Tibial artery (tissue), 4 donors: ENCODE measurements at regions of chr19 and their contacts with region 1.

Region 1: GRCh38 chr19:20167020-20167644 is at the start of gene ZNF486:
- DNase-seq: peak; percentile 98 to 99
- H3K4me3 ChIP-seq: peak within 1 kb of the TSS; percentile 71 to 86
- H3K27ac ChIP-seq: peak within 1 kb of the TSS; percentile 74 to 79
- H3K4me1 ChIP-seq: peaks cover 0 to 12% (median 9%) of the 10 kb centered on the region in 4 donors
- H3K27me3 ChIP-seq: no peaks in the 10 kb centered on the region
- CTCF ChIP-seq: no peak

Region 2: GRCh38 chr19:19732579-19733501 is 434.3 kb before region 1 on chr19 and contains the start of gene ZNF14:
- intact Hi-C with region 1: loop called (anchors 5 kb)
- DNase-seq: peak; percentile 96
- H3K4me3 ChIP-seq: peak within 1 kb of the TSS; percentile 75
- H3K27ac ChIP-seq: peak within 1 kb of the TSS; percentile 72 to 81
- H3K4me1 ChIP-seq: peaks cover 0 to 13% (median 5%) of the 10 kb centered on the region in 4 donors
- H3K27me3 ChIP-seq: no peaks in the 10 kb centered on the region
- CTCF ChIP-seq: no peak

Region 3: DNA sequence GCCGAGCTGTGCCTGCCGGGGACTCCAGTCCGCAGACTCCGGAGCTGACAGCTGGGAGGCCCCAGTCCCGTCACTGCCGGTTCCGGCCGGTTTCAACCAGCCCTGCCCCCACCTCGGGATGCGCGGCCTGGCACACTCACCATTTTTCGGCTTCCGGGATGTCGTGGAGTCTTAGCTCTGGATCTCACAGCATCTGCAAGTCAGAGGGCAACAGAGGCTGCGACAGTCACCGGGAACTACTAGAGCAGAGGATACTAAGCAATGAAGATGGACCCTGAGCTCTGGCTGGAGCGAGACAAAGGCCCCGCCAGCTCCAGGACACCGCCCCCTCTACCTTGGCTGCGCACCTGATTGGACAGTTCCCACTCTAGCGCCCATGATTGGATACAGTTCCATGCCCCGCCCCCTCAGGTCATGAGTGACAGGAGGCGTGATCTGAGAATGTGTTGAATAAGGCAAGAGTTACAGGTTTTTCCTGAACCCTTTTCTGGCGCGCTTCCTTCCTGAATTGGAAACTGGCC is 127.9 kb before region 1 on chr19 and contains the start of gene ZNF682:
- intact Hi-C with region 1: loop called (anchors 5 kb)
- DNase-seq: peak; percentile 97 to 99
- H3K4me3 ChIP-seq: peak within 1 kb of the TSS; percentile 69 to 81
- H3K27ac ChIP-seq: peak within 1 kb of the TSS; percentile 71 to 74
- H3K4me1 ChIP-seq: peaks cover 0 to 5% (median 0%) of the 10 kb centered on the region in 4 donors
- H3K27me3 ChIP-seq: peaks cover 0 to 3% of the 10 kb centered on the region in 2 donors
- CTCF ChIP-seq: no peak

Region 4: DNA sequence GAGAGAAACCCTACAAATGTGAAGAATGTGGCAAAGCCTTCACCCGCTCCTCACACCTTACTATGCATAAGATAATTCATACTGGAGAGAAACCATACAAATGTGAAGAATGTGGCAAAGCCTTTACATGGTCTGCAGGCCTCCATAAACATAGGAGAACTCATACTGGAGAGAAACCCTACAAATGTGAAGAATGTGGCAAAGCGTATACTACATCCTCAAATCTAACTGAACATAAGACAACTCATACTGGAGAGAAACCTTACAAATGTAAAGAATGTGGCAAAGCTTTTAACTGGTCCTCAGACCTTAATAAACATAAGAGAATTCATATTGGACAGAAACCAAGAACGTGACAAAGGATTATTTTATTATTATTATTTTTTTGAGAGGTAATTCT is 30.6 kb after region 1 on chr19:
- intact Hi-C with region 1: no loop called
- DNase-seq: no peak
- H3K4me3 ChIP-seq: no peak overlapping the region
- H3K27ac ChIP-seq: no peak overlapping the region
- H3K4me1 ChIP-seq: no peaks in the 10 kb centered on the region
- H3K27me3 ChIP-seq: no peaks in the 10 kb centered on the region
- CTCF ChIP-seq: no peak

Region 5: GRCh38 chr19:20414127-20414526 is 247.0 kb after region 1 on chr19:
- intact Hi-C with region 1: no loop called
- DNase-seq: no peak
- H3K4me3 ChIP-seq: no peak overlapping the region
- H3K27ac ChIP-seq: no peak overlapping the region
- H3K4me1 ChIP-seq: no peaks in the 10 kb centered on the region
- H3K27me3 ChIP-seq: no peaks in the 10 kb centered on the region
- CTCF ChIP-seq: no peak